ENCODE measurements at regions of chr10 and their contacts with region 1.

Region 1: DNA sequence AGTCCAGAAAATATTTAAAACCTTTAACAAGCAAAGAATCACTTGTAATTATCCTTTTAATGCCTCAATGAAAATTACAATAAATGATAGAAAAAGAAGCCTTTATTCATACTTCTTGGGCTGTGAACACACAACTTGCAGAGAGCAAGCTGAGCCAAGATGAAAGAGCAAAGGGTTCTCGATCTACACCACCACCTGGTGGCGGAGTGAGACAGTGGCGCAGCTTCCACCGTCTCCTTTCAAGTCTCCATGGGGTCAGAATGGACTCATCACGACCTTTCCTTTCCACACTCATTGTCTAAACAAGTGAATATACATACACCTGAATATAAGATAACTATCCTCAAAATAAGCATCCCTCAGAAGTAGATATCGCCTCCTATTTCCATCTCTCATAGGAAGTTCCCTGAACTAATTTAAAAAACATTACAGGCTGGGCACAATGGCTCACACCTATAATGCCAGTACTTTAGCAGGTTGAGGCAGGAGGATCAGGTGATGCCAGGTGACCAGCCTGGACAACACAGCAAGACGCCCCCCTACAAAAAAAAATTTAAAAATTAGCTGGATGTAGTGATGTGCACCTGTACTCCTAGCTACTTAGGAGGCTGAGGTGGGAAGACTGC is 40.7 kb downstream of the ATE1 start:
- DNase-seq: peak; percentile 43
- H3K4me3 ChIP-seq: no peak overlapping the region
- H3K27ac ChIP-seq: no peak overlapping the region
- H3K27me3 ChIP-seq: no peaks in the 10 kb centered on the region
- CTCF ChIP-seq: peak; percentile 95

Region 2: GRCh38 chr10:120942806-120943413 is 944.2 kb before region 1 on chr10:
- CTCF ChIA-PET with region 1: interaction called, 23 read pairs
- POLR2A ChIA-PET with region 1: no interaction called
- DNase-seq: peak; percentile 34
- H3K4me3 ChIP-seq: peak overlapping the region; percentile 25
- H3K27ac ChIP-seq: no peak overlapping the region
- H3K27me3 ChIP-seq: no peaks in the 10 kb centered on the region
- CTCF ChIP-seq: peak; percentile 76

Region 3: DNA sequence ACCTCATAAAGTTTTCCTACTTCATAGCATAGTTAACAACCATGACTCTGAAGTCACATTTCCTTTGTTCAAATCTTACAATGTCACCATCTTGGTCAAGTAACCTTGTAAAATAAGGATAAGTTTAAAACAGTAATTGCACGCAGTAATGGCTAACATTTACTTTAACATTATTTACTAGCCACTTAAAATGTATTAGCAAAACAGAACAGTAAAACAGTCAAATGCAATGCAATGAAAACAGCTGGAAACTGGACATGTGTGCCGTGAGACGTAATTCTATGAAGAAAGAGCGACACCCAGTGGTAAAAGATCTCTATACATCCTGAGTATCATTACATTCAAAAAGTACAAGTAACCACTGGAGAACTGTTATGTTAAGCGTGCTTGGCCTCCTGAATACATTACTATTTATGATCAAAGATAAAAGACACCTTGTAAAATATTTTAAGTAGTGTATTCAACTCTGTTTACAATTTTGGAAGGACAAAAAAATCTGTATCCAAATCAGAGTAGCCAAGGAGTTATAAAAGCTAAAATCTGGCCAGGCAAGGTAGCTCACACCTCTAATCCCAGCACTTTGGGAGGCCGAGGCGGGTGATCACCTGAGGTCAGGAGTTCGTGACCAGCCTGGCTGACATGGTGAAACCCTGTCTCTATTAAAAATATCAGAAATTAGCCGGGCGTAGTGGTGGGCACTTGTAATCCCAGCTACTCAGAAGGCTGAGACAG is 13.5 kb after region 1 on chr10:
- CTCF ChIA-PET with region 1: interaction called, 22 read pairs
- POLR2A ChIA-PET with region 1: no interaction called
- DNase-seq: peak; percentile 42
- H3K4me3 ChIP-seq: no peak overlapping the region
- H3K27ac ChIP-seq: no peak overlapping the region
- H3K27me3 ChIP-seq: no peaks in the 10 kb centered on the region
- CTCF ChIP-seq: peak; percentile 66

Measured in AG04450 (cell line).